HEK293T (cell line): ENCODE measurements at regions of chr7 and their contacts with region 1.

Region 1: GRCh38 chr7:100101016-100101862 is at the starts of genes AP4M1 and MCM7:
- DNase-seq: peak; percentile 94

Region 2: DNA sequence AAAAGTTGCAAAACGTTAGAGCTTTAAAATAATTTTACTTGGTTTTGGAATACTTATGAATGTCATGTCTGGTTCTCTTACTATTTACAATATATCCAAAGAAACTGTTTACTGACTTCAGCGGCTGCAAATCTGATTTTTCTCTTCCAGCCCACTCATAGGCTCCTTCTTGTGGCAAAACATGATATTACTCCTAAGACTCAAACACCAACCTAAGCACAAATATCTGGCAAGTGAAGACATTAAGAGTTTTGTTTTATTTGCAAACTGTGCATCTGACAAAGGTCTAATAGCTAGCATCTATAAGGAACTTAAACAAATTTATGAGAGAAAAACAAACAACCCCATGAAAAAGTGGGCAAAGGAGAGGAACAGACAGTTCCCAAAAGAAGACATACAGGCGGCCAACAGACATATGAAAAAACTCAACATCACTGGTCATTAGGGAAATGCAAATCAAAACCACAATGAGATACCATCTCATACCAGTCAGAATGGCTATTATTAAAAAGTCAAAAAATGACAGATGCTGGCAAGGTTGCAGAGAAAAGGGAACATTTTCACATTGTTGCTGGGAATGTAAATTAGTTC is 151.5 kb before region 1 on chr7:
- CTCF ChIA-PET with region 1: no interaction called
- POLR2A ChIA-PET with region 1: no interaction called
- DNase-seq: no peak

Region 3: GRCh38 chr7:100081535-100082102 is 19.6 kb before region 1 on chr7 and contains the start of gene ZNF3:
- CTCF ChIA-PET with region 1: interaction called, 4 read pairs
- POLR2A ChIA-PET with region 1: interaction called, 26 read pairs
- DNase-seq: peak; percentile 94

Region 4: GRCh38 chr7:100111914-100112313 is 10.7 kb after region 1 on chr7:
- CTCF ChIA-PET with region 1: interaction called, 3 read pairs
- POLR2A ChIA-PET with region 1: interaction called, 40 read pairs
- DNase-seq: no peak

Region 5: DNA sequence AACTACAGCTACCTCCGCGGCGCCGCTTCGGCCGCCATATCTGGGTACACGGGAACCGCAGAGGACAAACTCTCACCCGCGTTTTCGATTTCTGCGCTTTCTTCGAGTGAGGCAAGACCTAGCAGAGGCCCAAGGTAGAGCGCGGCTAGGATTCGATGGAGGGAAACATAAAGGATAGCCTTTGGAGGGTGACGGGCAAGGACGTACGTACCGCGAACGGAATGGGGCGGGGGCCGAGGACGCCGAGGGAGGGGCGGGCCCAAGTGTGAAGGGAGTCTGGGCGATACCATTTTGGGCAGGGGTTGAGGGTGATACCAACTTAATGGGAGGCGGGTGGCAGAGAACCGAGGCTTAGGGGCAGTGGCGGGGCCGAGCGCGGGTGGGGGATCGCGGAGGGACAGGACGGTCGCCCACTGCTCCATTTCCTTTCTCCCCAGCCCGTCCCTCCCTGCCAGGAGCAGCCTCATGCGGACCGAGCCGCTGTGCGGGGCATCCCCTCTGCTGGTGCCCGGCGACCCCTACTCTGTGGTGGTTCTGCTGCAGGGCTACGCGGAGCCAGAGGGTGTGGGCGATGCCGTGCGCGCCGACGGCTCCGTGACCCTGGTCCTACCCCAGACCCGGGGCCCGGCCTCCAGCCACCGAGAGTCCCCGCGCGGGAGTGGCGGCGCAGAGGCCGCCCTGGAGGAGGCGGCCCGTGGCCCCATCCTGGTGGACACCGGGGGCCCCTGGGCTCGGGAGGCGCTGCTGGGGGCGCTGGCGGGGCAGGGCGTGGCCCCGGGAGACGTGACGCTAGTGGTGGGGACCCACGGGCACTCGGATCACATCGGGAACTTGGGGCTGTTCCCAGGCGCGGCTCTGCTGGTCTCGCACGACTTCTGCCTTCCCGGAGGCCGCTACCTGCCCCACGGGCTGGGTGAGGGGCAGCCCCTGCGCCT is 26.0 kb after region 1 on chr7 and contains the start of gene MBLAC1:
- CTCF ChIA-PET with region 1: interaction called, 7 read pairs
- POLR2A ChIA-PET with region 1: interaction called, 80 read pairs
- DNase-seq: peak; percentile 84

Region 6: GRCh38 chr7:100148559-100149350 is 47.5 kb after region 1 on chr7 and contains the start of gene LAMTOR4:
- CTCF ChIA-PET with region 1: interaction called, 3 read pairs
- POLR2A ChIA-PET with region 1: interaction called, 23 read pairs
- DNase-seq: peak; percentile 97